ENCODE measurements at regions of chr1 and their contacts with region 1.

Region 1: GRCh38 chr1:111346089-111346885 is 55.6 kb downstream of the CHIA start:
- DNase-seq: peak; percentile 69
- ATAC-seq: peak; percentile 99
- H3K4me3 ChIP-seq: peak overlapping the region; percentile 62
- H3K27ac ChIP-seq: peak overlapping the region; percentile 1; the same call in 1 of the 2 replicates
- H3K4me1 ChIP-seq: no peaks in the 10 kb centered on the region
- H3K27me3 ChIP-seq: peaks cover 9% of the 10 kb centered on the region
- CTCF ChIP-seq: no peak
- POLR2A ChIP-seq: no peak
- RAD21 ChIP-seq: no peak

Region 2: DNA sequence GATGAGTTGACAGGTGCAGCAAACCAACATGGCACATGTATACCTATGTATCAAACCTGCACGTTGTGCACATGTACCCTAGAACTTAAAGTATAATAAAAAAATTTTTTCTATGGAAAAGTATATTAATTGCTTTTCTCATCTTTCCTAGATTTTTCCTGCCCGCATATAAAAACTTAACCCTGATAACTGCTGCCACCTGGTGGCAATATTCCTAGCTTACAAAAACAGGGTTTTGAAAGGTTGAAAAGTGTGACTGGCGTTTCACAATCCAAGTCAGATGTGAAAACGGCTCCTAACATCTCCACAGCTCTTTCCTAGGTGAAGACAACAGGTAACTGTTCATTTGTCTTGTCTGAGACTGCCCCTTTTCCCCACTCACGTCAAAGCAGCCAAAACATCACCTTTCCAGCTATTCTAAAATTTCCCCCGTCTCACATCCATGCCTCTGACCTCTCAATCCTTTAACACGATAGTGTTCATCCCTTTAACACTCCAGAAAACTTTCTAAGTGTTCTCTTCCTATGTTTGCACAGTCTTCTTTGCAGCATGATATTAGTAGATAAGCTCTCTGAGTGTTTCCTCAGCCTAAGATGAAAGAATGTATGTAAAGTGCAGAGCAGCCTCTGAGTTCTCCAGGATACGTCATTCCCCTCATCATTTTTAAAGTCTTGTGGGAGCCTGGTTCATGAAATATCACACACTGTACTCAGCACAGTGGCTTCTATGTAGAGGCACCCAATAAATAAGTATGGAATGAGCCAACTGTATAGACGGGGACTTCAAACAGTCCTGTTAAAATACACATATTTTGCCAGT is 53.7 kb after region 1 on chr1:
- CTCF ChIA-PET with region 1: no interaction called
- POLR2A ChIA-PET with region 1: no interaction called
- dilution Hi-C with region 1: no loop called
- in situ Hi-C with region 1: no loop called
- intact Hi-C with region 1: loop called (anchors 10 kb)
- DNase-seq: peak; percentile 55
- ATAC-seq: peak; percentile 63
- H3K4me3 ChIP-seq: no peak overlapping the region
- H3K27ac ChIP-seq: no peak overlapping the region
- H3K4me1 ChIP-seq: no peaks in the 10 kb centered on the region
- H3K27me3 ChIP-seq: peaks cover 24% of the 10 kb centered on the region
- CTCF ChIP-seq: peak; percentile 70
- POLR2A ChIP-seq: no peak
- RAD21 ChIP-seq: peak; percentile 72

Measured in IMR-90 (cell line).